ENCODE measurements at regions of chr5 and their contacts with region 1.

Region 1: DNA sequence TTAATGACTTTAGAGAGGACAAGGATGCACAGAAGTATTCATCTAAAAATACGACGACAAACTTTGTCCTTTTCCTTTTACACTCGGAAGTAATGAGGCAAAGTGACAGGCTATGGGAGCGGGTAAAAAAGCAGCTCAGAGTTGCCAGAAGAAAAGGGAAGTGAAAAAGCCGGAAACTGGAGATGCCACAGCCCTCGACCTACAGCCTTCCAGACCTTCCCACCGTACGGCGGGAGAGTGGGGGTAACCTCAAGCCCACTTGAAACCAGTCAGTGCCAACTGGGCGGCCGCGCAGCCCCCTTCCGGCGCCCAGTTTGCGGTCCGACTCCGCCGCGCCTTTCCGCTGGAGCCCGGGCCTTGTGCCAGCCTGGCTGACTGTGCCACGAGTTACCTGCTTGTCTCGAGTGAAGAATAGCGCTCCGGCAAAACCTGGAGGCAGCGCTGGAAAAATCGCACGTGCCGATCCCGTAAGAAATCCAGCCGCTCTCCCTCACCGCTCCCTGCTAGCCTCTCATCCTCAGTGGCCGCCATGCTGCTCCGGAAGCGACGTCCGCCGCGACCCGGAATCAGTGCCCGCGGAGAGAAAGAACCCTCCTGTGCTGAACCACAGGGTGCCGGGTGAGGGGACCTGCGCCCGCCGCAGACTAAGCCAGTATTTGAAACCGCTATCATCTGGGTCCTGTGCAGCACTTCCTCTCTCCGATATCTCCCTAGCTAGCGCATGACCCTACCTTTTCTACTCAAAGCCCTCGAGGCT is at the start of gene PGGT1B:
- DNase-seq: peak; percentile 37 to 83 (median 72)
- ATAC-seq: peak; percentile 94
- H3K4me3 ChIP-seq: peak within 1 kb of the TSS; percentile 82 to 97
- H3K4me3 Mint-ChIP-seq: peak within 1 kb of the TSS; percentile 94
- H3K27ac ChIP-seq: peak within 1 kb of the TSS; percentile 62 to 91
- H3K27ac Mint-ChIP-seq: peak within 1 kb of the TSS; percentile 98
- H3K4me1 ChIP-seq: peaks cover 28% of the 10 kb centered on the region
- H3K4me1 Mint-ChIP-seq: peaks cover 49% of the 10 kb centered on the region
- H3K27me3 ChIP-seq: no peaks in the 10 kb centered on the region
- H3K27me3 Mint-ChIP-seq: no peaks in the 10 kb centered on the region
- CTCF ChIP-seq: no peak
- total RNA-seq, gene PGGT1B: 55.2 to 57.0 TPM

Region 2: GRCh38 chr5:115194676-115195075 is 67.8 kb before region 1 on chr5:
- CTCF ChIA-PET with region 1: no interaction called
- POLR2A ChIA-PET with region 1: no interaction called
- intact Hi-C with region 1: no loop called
- DNase-seq: no peak
- ATAC-seq: no peak
- H3K4me3 ChIP-seq: no peak overlapping the region
- H3K4me3 Mint-ChIP-seq: no peak overlapping the region
- H3K27ac ChIP-seq: no peak overlapping the region
- H3K27ac Mint-ChIP-seq: no peak overlapping the region
- H3K4me1 ChIP-seq: no peaks in the 10 kb centered on the region
- H3K4me1 Mint-ChIP-seq: no peaks in the 10 kb centered on the region
- H3K27me3 ChIP-seq: no peaks in the 10 kb centered on the region
- H3K27me3 Mint-ChIP-seq: peaks cover 2% of the 10 kb centered on the region
- CTCF ChIP-seq: no peak

Region 3: GRCh38 chr5:115209279-115209678 is 53.2 kb before region 1 on chr5:
- CTCF ChIA-PET with region 1: no interaction called
- POLR2A ChIA-PET with region 1: no interaction called
- intact Hi-C with region 1: no loop called
- DNase-seq: peak in 7 of 9 experiments; percentile 1 to 78 (median 21)
- ATAC-seq: peak; percentile 90
- H3K4me3 ChIP-seq: no peak overlapping the region
- H3K4me3 Mint-ChIP-seq: no peak overlapping the region
- H3K27ac ChIP-seq: peak overlapping the region in 1 of 2 experiments; percentile 41
- H3K27ac Mint-ChIP-seq: peak overlapping the region; percentile 64
- H3K4me1 ChIP-seq: no peaks in the 10 kb centered on the region
- H3K4me1 Mint-ChIP-seq: peaks cover 15% of the 10 kb centered on the region
- H3K27me3 ChIP-seq: no peaks in the 10 kb centered on the region
- H3K27me3 Mint-ChIP-seq: no peaks in the 10 kb centered on the region
- CTCF ChIP-seq: no peak

Region 4: DNA sequence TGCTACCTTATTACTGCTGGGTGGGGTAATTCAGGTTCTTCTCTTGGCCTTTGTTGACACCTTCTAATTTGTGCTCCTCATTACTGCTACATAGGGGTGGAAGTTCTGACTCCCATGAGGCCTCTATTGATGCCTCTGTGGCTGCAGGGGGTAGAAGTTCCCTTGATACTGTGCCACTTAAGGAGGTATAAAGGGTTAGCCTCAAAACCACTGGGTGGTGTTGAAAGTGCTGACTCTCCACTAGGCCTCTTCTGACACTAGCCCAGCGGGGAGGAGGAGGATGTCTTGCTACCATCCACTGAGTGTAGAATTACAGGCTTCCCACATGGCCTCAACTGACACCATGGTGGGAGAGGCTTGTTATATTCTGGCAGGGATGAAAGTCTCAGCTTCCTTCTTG is 70.7 kb after region 1 on chr5:
- CTCF ChIA-PET with region 1: no interaction called
- POLR2A ChIA-PET with region 1: no interaction called
- intact Hi-C with region 1: no loop called
- DNase-seq: peak in 2 of 9 experiments; percentile 18 to 19
- ATAC-seq: no peak
- H3K4me3 ChIP-seq: no peak overlapping the region
- H3K4me3 Mint-ChIP-seq: no peak overlapping the region
- H3K27ac ChIP-seq: no peak overlapping the region
- H3K27ac Mint-ChIP-seq: no peak overlapping the region
- H3K4me1 ChIP-seq: no peaks in the 10 kb centered on the region
- H3K4me1 Mint-ChIP-seq: no peaks in the 10 kb centered on the region
- H3K27me3 ChIP-seq: no peaks in the 10 kb centered on the region
- H3K27me3 Mint-ChIP-seq: peaks cover 12% of the 10 kb centered on the region
- CTCF ChIP-seq: no peak

Region 5: DNA sequence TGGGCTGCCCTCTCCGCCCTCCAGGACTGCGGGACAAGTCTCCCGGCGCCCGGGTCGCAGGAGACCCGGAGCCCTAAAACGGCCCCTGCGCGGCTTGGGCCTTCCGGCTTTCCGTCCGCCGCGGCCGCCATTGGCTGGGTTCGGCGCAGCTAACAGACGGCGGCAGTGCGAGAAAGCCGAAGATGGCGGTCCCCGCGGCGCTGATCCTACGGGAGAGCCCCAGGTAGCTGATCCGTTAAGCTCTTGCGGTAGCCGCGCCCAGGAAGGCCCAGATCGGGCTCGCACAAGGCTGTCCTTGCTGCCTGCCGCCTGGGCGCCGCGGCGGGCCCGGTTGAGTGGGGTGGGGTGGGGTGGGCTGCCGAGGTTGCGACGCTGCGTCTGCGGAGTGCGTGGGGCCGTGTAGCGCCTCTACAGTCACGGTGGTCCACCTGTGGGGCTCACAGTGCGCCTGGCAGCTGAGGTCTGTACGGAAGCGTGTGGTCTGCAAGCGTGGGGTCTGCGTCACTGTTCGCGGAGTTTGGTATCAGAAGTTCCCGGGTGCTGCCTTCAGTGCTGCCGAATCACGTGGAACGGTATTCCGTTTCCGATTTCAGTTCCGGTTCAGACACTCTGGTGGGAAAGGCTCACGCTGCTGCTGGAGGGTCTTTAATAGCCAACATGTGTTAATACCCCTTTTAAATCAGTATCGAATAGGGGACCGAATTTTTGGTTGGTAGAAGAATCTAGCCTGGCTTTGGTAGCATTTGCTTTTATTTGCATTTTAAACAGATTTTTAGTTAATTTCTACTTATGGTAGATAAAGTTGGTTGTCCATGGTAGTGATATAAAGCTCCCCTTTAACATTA is 822.6 kb after region 1 on chr5 and contains the start of gene COMMD10:
- CTCF ChIA-PET with region 1: no interaction called
- POLR2A ChIA-PET with region 1: no interaction called
- intact Hi-C with region 1: loop called in 1 of 2 experiments (anchors 5 kb)
- DNase-seq: peak; percentile 67 to 97 (median 85)
- ATAC-seq: peak; percentile 93
- H3K4me3 ChIP-seq: peak within 1 kb of the TSS; percentile 45 to 71
- H3K4me3 Mint-ChIP-seq: peak within 1 kb of the TSS; percentile 91
- H3K27ac ChIP-seq: peak within 1 kb of the TSS; percentile 87 to 96
- H3K27ac Mint-ChIP-seq: peak within 1 kb of the TSS; percentile 96
- H3K4me1 ChIP-seq: peaks cover 18% of the 10 kb centered on the region
- H3K4me1 Mint-ChIP-seq: peaks cover 62% of the 10 kb centered on the region
- H3K27me3 ChIP-seq: no peaks in the 10 kb centered on the region
- H3K27me3 Mint-ChIP-seq: no peaks in the 10 kb centered on the region
- CTCF ChIP-seq: no peak
- total RNA-seq, gene COMMD10: 18.0 to 18.8 TPM

Measured in CD8-positive, alpha-beta T cell (primary cell).